H1 (cell line): ENCODE measurements at regions of chr9 and their contacts with region 1.

Region 1: GRCh38 chr9:121686930-121687541 is 35.6 kb downstream of the DAB2IP start:
- DNase-seq: peak in 1 of 2 experiments; percentile 94
- H3K4me3 ChIP-seq: no peak overlapping the region
- H3K27ac ChIP-seq: no peak overlapping the region
- H3K4me1 ChIP-seq: peaks cover 2 to 6% (median 4%) of the 10 kb centered on the region in 4 experiments
- H3K27me3 ChIP-seq: no peaks in the 10 kb centered on the region; a peak in 1 of 7 replicates
- CTCF ChIP-seq: peak; percentile 89 to 95 (median 90)
- EP300 ChIP-seq: no peak
- POLR2A ChIP-seq: no peak
- RAD21 ChIP-seq: peak; percentile 87 to 90

Region 2: DNA sequence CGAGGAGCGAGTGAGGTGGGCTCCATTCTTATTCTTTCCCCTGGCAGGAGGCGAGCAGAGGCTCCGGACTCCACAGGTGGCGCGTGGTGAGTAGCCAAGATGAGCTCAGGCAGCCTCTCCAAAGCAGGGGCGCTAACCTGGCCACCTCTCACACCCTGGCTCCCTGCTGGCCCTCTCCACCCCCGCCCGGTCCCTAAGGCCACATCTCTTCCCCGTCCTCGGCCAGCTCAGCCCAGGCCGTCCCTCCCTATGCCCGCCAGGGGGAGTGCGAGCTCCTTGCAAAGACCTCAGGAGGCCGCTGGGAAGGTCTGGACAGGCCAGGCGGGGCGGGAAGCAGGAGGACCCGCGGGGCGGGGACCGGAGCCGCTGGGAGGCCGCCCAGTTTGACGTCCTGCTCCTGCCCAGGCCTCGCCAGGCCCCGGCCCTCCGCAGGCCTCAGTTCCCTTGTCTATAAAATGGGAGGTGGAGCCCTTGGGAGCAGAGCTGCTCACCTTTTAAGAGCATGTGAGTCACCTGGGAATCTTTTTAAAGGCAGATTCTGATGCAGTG is 141.1 kb before region 1 on chr9:
- CTCF ChIA-PET with region 1: interaction called, 55 read pairs
- POLR2A ChIA-PET with region 1: no interaction called
- DNase-seq: peak; percentile 87 to 97
- H3K4me3 ChIP-seq: peak overlapping the region in 1 of 4 experiments; percentile 42; a peak in 3 of 8 replicates
- H3K27ac ChIP-seq: no peak overlapping the region
- H3K4me1 ChIP-seq: peaks cover 0 to 5% (median under 1%) of the 10 kb centered on the region in 4 experiments; a peak in 2 of 7 replicates
- H3K27me3 ChIP-seq: peaks cover 0 to 6% (median 4%) of the 10 kb centered on the region in 4 experiments; a peak in 3 of 7 replicates
- CTCF ChIP-seq: peak; percentile 93 to 98 (median 97)
- EP300 ChIP-seq: peak in 1 of 2 experiments; percentile 22; a peak in 1 of 3 replicates
- POLR2A ChIP-seq: no peak
- RAD21 ChIP-seq: peak; percentile 95 to 99

Region 3: GRCh38 chr9:121640076-121640475 is 47.0 kb before region 1 on chr9:
- CTCF ChIA-PET with region 1: interaction called, 670 read pairs
- POLR2A ChIA-PET with region 1: interaction called, 3 read pairs
- DNase-seq: peak in 1 of 2 experiments; percentile 86
- H3K4me3 ChIP-seq: no peak overlapping the region
- H3K27ac ChIP-seq: no peak overlapping the region
- H3K4me1 ChIP-seq: peaks cover 0 to 21% (median 12%) of the 10 kb centered on the region in 4 experiments; a peak in 5 of 7 replicates
- H3K27me3 ChIP-seq: no peaks in the 10 kb centered on the region
- CTCF ChIP-seq: peak; percentile 58 to 69 (median 62)
- EP300 ChIP-seq: no peak
- POLR2A ChIP-seq: no peak
- RAD21 ChIP-seq: peak; percentile 73 to 80

Region 4: GRCh38 chr9:121667214-121667613 is 19.8 kb before region 1 on chr9:
- CTCF ChIA-PET with region 1: interaction called, 231 read pairs
- POLR2A ChIA-PET with region 1: no interaction called
- DNase-seq: no peak
- H3K4me3 ChIP-seq: no peak overlapping the region
- H3K27ac ChIP-seq: no peak overlapping the region
- H3K4me1 ChIP-seq: peaks cover 0 to 7% (median 1%) of the 10 kb centered on the region in 4 experiments; a peak in 2 of 7 replicates
- H3K27me3 ChIP-seq: no peaks in the 10 kb centered on the region; a peak in 1 of 7 replicates
- CTCF ChIP-seq: no peak
- EP300 ChIP-seq: no peak
- POLR2A ChIP-seq: no peak
- RAD21 ChIP-seq: no peak

Region 5: GRCh38 chr9:121744002-121744686 is 57.1 kb after region 1 on chr9:
- CTCF ChIA-PET with region 1: interaction called, 305 read pairs
- POLR2A ChIA-PET with region 1: no interaction called
- DNase-seq: no peak
- H3K4me3 ChIP-seq: peak overlapping the region in 1 of 4 experiments; percentile 2; a peak in 1 of 8 replicates
- H3K27ac ChIP-seq: no peak overlapping the region
- H3K4me1 ChIP-seq: peaks cover 15 to 41% (median 23%) of the 10 kb centered on the region in 4 experiments
- H3K27me3 ChIP-seq: no peaks in the 10 kb centered on the region
- CTCF ChIP-seq: peak; percentile 27 to 48 (median 35)
- EP300 ChIP-seq: no peak
- POLR2A ChIP-seq: no peak
- RAD21 ChIP-seq: peak; percentile 47 to 53; a peak in 3 of 4 replicates

Region 6: GRCh38 chr9:121929893-121930875 is 243.1 kb after region 1 on chr9:
- CTCF ChIA-PET with region 1: interaction called, 13 read pairs
- POLR2A ChIA-PET with region 1: no interaction called
- DNase-seq: peak in 1 of 2 experiments; percentile 63
- H3K4me3 ChIP-seq: no peak overlapping the region
- H3K27ac ChIP-seq: no peak overlapping the region
- H3K4me1 ChIP-seq: peaks cover 0 to 2% (median 0%) of the 10 kb centered on the region in 4 experiments; a peak in 3 of 7 replicates
- H3K27me3 ChIP-seq: no peaks in the 10 kb centered on the region; a peak in 2 of 7 replicates
- CTCF ChIP-seq: peak; percentile 81 to 88 (median 86)
- EP300 ChIP-seq: no peak
- POLR2A ChIP-seq: no peak
- RAD21 ChIP-seq: peak; percentile 91 to 95